Activated B cell treated with CpG ODN at 0.5 μM for 24 hours (primary cell): ENCODE measurements at regions of chr20 and their contacts with region 1.

Region 1: GRCh38 chr20:58309575-58310290 is at the start of gene RAB22A:
- DNase-seq: peak; percentile 85
- ATAC-seq: peak; percentile 61
- H3K4me3 Mint-ChIP-seq: peak within 1 kb of the TSS; percentile 94
- H3K27ac Mint-ChIP-seq: peak within 1 kb of the TSS; percentile 94
- H3K4me1 Mint-ChIP-seq: peaks cover 58% of the 10 kb centered on the region
- H3K27me3 Mint-ChIP-seq: no peaks in the 10 kb centered on the region
- CTCF ChIP-seq: no peak
- total RNA-seq, gene RAB22A: 14.4 and 15.7 TPM in 2 replicates

Region 2: DNA sequence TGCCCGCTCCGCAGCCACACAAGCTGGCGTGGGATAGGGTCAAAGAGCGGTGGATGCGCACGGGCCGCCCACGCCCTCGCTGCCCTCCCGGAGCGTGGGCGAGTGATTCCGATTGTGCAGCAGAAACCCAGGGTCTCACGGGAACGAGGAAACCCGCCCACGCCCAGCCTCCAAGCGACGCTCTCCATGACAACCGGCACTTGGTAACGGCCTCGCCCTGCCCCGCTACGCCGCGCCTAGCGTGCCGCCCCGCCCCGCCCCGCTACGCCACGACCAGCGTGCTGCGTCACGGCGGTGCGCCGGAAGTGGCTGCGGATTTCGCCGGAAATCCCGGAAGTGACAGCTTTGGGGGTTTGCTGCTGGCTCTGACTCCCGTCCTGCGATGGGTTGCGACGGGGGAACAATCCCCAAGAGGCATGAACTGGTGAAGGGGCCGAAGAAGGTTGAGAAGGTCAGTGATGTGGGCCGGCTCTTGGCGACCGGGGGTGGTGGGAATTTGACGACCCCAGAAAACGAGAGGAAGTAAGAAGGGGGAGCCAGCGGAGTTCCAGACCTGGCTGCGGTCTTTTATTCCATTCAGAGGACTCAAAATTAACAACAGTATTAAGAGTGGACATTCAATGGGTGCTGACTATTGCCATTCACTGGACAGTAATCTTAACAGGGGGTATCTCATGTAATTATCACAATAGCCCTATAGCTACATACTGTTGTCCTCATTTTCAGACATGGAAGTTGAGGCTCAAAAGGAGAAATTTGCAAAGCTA is 1841.2 kb before region 1 on chr20 and contains the start of gene RTF2:
- CTCF ChIA-PET with region 1: no interaction called
- POLR2A ChIA-PET with region 1: no interaction called
- intact Hi-C with region 1: loop called (anchors 2 kb)
- DNase-seq: peak; percentile 99
- ATAC-seq: peak; percentile 93
- H3K4me3 Mint-ChIP-seq: peak within 1 kb of the TSS; percentile 100
- H3K27ac Mint-ChIP-seq: peak within 1 kb of the TSS; percentile 99
- H3K4me1 Mint-ChIP-seq: peaks cover 44% of the 10 kb centered on the region
- H3K27me3 Mint-ChIP-seq: no peaks in the 10 kb centered on the region
- CTCF ChIP-seq: no peak
- total RNA-seq, gene RTF2: 81.0 and 81.1 TPM in 2 replicates

Region 3: DNA sequence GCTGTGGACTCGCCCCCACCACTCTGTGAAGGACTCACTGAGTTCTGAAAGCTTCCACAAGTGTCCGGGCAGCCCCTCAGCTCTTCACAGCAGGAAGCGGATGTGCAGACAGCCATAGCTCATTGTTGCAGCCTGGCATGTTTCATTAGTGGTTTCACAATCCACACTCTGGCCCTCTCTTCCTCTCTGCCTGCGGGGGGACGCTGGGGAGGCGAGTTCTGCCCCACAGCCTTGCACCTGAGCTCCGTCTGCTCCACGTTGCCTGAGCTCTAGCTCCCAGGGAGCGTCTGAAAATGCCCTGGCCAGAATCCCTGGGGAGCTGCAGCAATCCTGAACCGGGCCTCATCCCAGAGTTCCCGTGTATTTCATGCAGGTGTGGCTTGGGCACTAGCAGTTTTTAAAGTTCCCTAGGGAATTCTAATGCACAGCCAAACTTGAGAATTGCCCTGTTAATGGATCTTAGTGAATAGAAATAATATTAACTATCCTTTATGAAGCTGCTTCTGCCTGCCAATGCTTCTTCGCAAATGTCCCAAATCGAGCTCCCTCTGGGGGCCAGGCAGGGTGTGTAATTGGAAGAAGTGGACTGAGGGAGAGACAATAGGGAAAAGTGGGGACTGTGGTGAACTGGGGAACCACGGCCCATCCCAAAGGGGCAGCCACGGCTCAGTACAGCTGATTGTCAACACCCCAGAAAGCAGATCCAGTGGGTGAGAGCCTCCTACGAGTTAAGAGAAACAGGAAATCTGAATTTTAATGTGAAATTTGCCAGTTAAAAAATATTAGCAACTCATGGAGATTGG is 836.3 kb before region 1 on chr20:
- CTCF ChIA-PET with region 1: no interaction called
- POLR2A ChIA-PET with region 1: no interaction called
- intact Hi-C with region 1: loop called (anchors 10 kb)
- DNase-seq: peak; percentile 24
- ATAC-seq: peak; percentile 66
- H3K4me3 Mint-ChIP-seq: peak overlapping the region; percentile 62
- H3K27ac Mint-ChIP-seq: peak overlapping the region; percentile 63
- H3K4me1 Mint-ChIP-seq: peaks cover 87% of the 10 kb centered on the region
- H3K27me3 Mint-ChIP-seq: peaks cover 5% of the 10 kb centered on the region
- CTCF ChIP-seq: no peak

Region 4: DNA sequence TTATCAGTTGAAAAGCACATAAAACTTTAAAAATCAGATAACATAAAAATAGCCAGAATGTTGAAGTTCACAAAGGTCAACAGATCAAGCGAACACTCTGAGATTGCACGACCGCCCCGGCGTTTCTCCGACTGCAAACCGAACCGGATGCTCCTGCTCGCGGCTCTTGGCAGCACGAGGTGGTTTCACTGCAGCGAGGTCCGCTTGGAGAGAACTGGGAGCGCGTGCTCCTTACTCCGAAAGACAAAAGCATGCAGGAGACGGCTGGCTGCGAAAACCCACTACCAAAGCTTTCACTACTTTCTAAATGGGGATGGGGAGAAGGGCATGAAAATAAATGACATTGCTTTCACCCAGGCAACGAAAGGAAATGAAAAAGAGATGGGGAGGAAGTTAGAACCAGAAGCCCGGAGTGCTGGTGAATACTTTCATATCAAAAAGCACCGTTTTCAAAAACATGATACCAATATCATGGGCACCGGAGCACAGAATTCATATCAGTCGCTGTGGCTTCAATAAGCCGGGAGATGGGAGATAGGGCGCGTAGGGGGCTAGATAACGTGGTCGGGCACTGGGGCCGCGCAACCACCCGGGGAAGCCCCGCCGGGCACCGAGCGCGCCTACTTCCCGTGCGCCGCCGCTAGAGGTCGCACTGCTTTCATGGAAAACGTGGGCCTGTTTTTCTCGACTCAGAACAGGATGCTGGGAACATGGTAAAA is 73.0 kb before region 1 on chr20:
- CTCF ChIA-PET with region 1: interaction called, 5 read pairs
- POLR2A ChIA-PET with region 1: no interaction called
- intact Hi-C with region 1: loop called (anchors 1 kb)
- DNase-seq: peak; percentile 75
- ATAC-seq: peak; percentile 92
- H3K4me3 Mint-ChIP-seq: peak overlapping the region; percentile 93
- H3K27ac Mint-ChIP-seq: peak overlapping the region; percentile 87
- H3K4me1 Mint-ChIP-seq: peaks cover 7% of the 10 kb centered on the region
- H3K27me3 Mint-ChIP-seq: no peaks in the 10 kb centered on the region
- CTCF ChIP-seq: no peak

Region 5: GRCh38 chr20:58458180-58459057 is 148.7 kb after region 1 on chr20:
- CTCF ChIA-PET with region 1: no interaction called
- POLR2A ChIA-PET with region 1: no interaction called
- intact Hi-C with region 1: loop called (anchors 2 kb)
- DNase-seq: peak; percentile 58
- ATAC-seq: peak; percentile 99
- H3K4me3 Mint-ChIP-seq: peak overlapping the region; percentile 53
- H3K27ac Mint-ChIP-seq: peak overlapping the region; percentile 74
- H3K4me1 Mint-ChIP-seq: peaks cover 30% of the 10 kb centered on the region
- H3K27me3 Mint-ChIP-seq: no peaks in the 10 kb centered on the region
- CTCF ChIP-seq: no peak

Region 6: GRCh38 chr20:58623826-58624473 is 314.2 kb after region 1 on chr20:
- CTCF ChIA-PET with region 1: no interaction called
- POLR2A ChIA-PET with region 1: no interaction called
- intact Hi-C with region 1: no loop called
- DNase-seq: no peak
- ATAC-seq: no peak
- H3K4me3 Mint-ChIP-seq: no peak overlapping the region
- H3K27ac Mint-ChIP-seq: no peak overlapping the region
- H3K4me1 Mint-ChIP-seq: peaks cover 2% of the 10 kb centered on the region
- H3K27me3 Mint-ChIP-seq: peaks cover 13% of the 10 kb centered on the region
- CTCF ChIP-seq: no peak

Region 7: GRCh38 chr20:58888521-58889333 is 579.0 kb after region 1 on chr20:
- CTCF ChIA-PET with region 1: no interaction called
- POLR2A ChIA-PET with region 1: interaction called, 3 read pairs
- intact Hi-C with region 1: loop called (anchors 1 kb)
- DNase-seq: peak; percentile 73
- ATAC-seq: peak; percentile 45
- H3K4me3 Mint-ChIP-seq: peak overlapping the region; percentile 84
- H3K27ac Mint-ChIP-seq: peak overlapping the region; percentile 59
- H3K4me1 Mint-ChIP-seq: peaks cover 27% of the 10 kb centered on the region
- H3K27me3 Mint-ChIP-seq: no peaks in the 10 kb centered on the region
- CTCF ChIP-seq: no peak